BJ (cell line): ENCODE measurements at regions of chr15 and their contacts with region 1.

Region 1: DNA sequence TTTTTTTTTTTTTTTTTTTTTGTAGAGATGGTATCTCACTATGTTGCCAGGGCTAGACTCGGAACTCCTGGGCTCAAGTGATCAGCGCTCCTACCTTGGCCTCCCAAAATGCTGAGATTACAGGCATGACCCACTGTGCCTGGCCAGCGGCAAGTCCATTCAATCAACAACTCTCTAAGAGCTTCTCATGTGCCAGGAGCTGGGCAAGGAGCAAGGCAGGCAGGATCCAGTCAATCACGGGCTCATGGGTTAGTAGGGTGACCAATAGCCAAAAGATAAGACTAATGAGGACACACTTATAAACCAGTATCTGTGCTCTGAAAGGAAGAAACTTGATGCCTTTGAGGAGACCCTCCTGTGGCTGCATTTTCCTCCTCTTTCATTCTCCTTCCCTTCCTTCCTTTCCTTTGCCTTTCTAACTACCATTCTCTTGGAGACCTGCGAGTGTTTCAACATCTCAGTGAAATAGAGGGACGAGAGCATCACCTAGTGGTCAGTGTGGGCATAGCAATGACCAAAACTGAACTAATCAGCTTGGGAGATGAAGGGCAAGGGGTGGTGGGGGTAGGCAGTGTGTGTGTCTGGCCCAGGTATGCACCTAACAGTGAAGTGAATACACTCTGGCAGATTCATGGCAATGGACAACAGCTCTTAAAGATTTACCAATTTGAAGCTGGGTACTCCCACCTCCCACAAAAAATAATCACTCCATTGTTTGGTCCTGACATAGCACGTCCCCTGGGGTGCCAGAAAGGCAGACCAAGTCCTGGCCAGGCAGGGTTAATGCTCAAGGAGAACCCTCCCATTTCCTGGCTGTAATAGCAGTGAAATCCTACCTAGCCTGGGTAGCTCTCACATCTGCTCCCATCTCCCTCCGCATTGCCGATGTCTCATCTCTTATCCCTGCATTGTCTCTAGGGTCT is 6.2 kb downstream of the RPP25 start:
- DNase-seq: no peak
- H3K4me3 ChIP-seq: no peak overlapping the region
- H3K27me3 ChIP-seq: no peaks in the 10 kb centered on the region
- CTCF ChIP-seq: peak; percentile 99

Region 2: GRCh38 chr15:74781431-74782258 is 168.7 kb before region 1 on chr15 and contains the start of gene CSK:
- CTCF ChIA-PET with region 1: interaction called, 205 read pairs
- POLR2A ChIA-PET with region 1: no interaction called
- DNase-seq: no peak
- H3K4me3 ChIP-seq: peak within 1 kb of the TSS; percentile 89
- H3K27me3 ChIP-seq: no peaks in the 10 kb centered on the region
- CTCF ChIP-seq: peak; percentile 48
- polyA plus RNA-seq, gene CSK: 15.1 and 25.3 TPM in 2 replicates

Region 3: GRCh38 chr15:74787251-74788041 is 162.9 kb before region 1 on chr15:
- CTCF ChIA-PET with region 1: interaction called, 11 read pairs
- POLR2A ChIA-PET with region 1: no interaction called
- DNase-seq: no peak
- H3K4me3 ChIP-seq: no peak overlapping the region
- H3K27me3 ChIP-seq: no peaks in the 10 kb centered on the region
- CTCF ChIP-seq: peak; percentile 71

Region 4: DNA sequence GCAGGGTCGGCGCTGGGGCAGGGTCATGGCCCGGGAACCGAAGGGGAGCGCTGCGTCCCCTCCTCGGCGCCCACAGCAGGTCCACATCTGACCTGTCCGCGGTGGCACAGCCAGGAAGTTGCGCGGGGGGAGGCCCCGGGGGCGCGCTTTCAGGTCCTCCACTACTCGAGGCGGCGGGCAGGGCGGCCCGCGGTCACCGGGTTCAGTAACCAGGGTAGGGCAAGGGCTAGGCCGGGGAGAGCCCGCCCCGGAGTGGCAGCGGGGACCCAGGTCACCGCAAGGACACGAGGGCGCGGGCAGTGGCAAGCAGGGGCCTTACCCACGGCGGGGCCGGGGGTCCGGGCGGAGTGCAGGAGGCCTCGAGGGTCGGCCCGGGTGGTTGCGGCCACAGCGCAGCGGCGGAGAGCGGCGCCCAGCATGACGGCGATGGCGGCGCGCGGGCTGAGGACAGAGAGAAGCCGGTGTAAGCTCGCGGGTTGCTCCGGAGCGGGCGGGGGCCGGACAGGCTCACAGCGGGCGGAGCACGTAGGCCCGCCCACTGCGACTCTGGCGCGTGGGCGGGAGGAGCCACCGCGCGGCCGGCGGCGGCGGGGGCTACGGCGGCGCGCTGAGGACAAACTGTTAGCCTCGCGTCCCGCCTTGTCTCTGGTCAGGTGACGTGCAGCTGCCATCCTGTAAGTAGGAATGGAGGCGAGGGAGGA is 12.6 kb before region 1 on chr15 and contains the start of gene COX5A:
- CTCF ChIA-PET with region 1: interaction called, 37 read pairs
- POLR2A ChIA-PET with region 1: no interaction called
- DNase-seq: peak; percentile 87
- H3K4me3 ChIP-seq: peak within 1 kb of the TSS; percentile 99
- H3K27me3 ChIP-seq: no peaks in the 10 kb centered on the region
- CTCF ChIP-seq: no peak
- polyA plus RNA-seq, gene COX5A: 64.6 and 106 TPM in 2 replicates

Region 5: DNA sequence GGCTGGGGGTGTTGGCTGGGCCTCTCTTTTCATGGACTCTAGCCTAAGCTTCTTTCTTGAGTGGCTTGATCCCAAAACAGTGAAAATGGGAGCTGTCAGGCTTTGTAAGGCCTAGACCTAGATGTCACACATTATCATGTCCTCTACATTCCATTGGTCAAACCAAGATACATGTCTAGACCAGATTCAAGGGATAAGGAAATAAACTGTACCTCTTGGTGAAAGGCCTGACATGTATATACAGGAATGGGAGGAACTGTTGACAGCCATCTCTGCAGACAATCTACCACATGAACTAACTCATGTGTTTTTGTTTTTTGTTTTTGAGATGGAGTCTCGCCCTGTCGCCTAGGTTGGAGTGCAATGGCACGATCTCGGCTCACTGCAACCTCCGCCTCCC is 17.3 kb after region 1 on chr15:
- CTCF ChIA-PET with region 1: interaction called, 11 read pairs
- POLR2A ChIA-PET with region 1: no interaction called
- DNase-seq: no peak
- H3K4me3 ChIP-seq: no peak overlapping the region
- H3K27me3 ChIP-seq: no peaks in the 10 kb centered on the region
- CTCF ChIP-seq: no peak

Region 6: DNA sequence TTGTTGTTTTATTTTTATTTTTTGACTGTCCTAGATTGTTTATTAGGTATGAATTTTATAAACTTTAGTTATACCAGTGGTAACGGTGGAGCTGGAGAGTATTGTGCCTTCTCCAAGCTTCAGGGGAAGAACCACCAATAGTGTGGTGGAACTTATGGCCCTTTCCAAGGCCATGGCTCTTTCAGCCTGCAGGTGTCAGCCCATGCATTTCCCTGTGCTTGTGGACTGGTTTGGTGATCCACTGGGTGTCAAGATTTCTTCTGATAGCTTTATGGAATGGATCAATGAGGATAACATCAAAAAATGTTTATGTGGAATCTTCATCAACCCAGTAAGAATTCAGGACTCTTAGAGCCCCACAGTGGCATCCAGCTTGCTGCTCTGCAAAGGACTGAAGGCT is 25.8 kb after region 1 on chr15:
- CTCF ChIA-PET with region 1: interaction called, 10 read pairs
- POLR2A ChIA-PET with region 1: no interaction called
- DNase-seq: no peak
- H3K4me3 ChIP-seq: no peak overlapping the region
- H3K27me3 ChIP-seq: peaks cover 3% of the 10 kb centered on the region; the same call in 1 of the 2 replicates
- CTCF ChIP-seq: no peak